ENCODE measurements at regions of chr4 and their contacts with region 1.

Region 1: GRCh38 chr4:113952452-113953029 is 26.9 kb downstream of the ARSJ start:
- DNase-seq: peak; percentile 15
- CTCF ChIP-seq: peak; percentile 74

Region 2: GRCh38 chr4:113636438-113636818 is 316.1 kb before region 1 on chr4:
- in situ Hi-C with region 1: no loop called
- DNase-seq: peak; percentile 22
- CTCF ChIP-seq: peak; percentile 51

Region 3: DNA sequence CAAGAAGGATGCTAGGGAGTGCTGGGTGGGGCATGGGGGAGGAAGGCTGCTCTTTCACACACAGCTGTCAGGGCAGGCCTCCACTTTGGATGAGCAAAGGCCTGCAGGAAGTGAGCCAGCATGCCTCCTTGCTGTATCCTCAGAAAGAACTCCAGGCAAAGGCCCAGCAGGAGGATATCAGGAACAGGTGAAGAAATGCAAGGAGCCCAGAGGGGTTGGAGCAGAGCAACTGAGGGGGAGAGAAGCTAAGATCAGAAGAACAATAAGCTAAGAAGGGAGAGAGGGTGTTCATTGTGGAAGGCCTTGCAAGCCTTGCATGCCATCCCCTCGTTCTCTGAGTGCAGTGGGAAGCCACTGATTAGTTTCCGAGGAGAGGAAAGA is 306.1 kb before region 1 on chr4:
- in situ Hi-C with region 1: no loop called
- DNase-seq: no peak
- CTCF ChIP-seq: no peak

Region 4: DNA sequence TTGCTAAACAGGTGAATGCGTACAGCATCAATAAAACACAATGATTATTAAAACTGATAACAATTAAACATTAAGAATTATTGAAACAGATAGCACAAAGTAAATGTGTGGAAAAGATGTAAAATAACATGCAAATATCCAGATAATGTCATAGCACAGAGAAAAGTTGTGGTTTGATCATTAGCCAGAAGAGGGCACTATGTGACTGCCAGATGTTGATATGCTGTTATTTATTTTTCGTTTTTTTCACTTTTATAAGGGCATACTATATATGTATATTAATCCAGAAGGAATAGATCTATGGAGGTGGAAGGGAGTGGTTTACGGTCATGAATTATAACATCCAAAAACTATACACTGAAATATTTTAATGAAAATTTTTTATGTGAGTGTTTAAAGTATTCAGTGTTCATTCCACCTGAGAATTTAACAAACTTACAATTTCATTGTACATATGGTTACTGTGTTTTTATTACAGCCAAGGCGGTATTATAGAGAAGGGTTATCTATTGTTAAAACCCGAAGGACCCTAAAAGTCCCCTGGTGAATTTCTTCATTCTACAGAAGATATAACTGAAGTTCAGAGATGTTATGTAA is 434.2 kb after region 1 on chr4:
- in situ Hi-C with region 1: loop called (anchors 25 kb)
- DNase-seq: peak; percentile 30
- CTCF ChIP-seq: peak; percentile 74